ENCODE measurements at regions of chr3 and their contacts with region 1.

Region 1: GRCh38 chr3:184229394-184230080 is at the start of gene VWA5B2:
- DNase-seq: peak; percentile 74
- ATAC-seq: peak; percentile 97
- H3K4me3 Mint-ChIP-seq: peak within 1 kb of the TSS; percentile 37
- H3K27ac Mint-ChIP-seq: no peak within 1 kb of the TSS
- H3K4me1 Mint-ChIP-seq: peaks cover 9% of the 10 kb centered on the region
- H3K27me3 Mint-ChIP-seq: peaks cover 48% of the 10 kb centered on the region
- total RNA-seq, gene VWA5B2: not detected

Region 2: GRCh38 chr3:183895296-183895695 is 334.2 kb before region 1 on chr3:
- CTCF ChIA-PET with region 1: interaction called, 11 read pairs
- POLR2A ChIA-PET with region 1: no interaction called
- DNase-seq: peak; percentile 56
- ATAC-seq: peak; percentile 62
- H3K4me3 Mint-ChIP-seq: no peak overlapping the region
- H3K27ac Mint-ChIP-seq: no peak overlapping the region
- H3K4me1 Mint-ChIP-seq: peaks cover 2% of the 10 kb centered on the region
- H3K27me3 Mint-ChIP-seq: peaks cover 7% of the 10 kb centered on the region

Region 3: DNA sequence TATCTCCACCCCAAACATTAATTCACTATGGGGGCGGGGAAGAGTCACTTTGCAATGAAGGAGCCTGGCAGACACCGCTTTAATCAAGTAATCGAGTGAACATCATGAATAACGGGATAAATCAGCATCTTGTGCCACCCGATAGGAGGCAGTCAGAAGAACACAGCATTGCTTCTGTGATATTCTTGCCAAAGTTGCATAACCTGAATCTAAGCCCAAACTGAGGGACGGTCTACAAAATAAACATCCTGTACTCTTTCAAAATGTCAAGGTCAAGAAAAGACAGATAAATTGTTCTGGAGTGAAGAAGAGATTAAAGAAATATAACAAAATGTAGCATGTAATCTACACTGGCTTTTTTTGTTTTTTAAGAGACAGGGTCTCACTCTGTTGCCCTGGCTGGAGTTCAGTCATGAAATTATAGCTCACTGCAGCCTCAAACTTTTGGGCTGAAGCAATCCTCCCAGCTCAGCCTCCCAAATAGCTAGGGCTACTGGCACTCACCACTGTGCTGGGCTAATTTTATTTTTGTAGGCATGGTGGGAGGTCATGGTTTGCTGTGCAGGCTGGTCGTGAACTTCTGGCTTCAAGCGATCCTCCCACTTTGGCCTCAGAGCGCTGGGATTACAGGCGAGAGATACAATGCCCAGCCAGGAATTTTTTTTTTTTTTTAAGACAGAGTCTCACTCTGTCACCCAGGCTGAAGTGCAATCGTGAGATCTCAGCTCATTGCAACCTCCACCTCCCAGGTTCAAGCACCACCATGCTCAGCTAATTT is 20.2 kb before region 1 on chr3:
- CTCF ChIA-PET with region 1: interaction called, 18 read pairs
- POLR2A ChIA-PET with region 1: interaction called, 3 read pairs
- DNase-seq: no peak
- ATAC-seq: no peak
- H3K4me3 Mint-ChIP-seq: no peak overlapping the region
- H3K27ac Mint-ChIP-seq: no peak overlapping the region
- H3K4me1 Mint-ChIP-seq: no peaks in the 10 kb centered on the region
- H3K27me3 Mint-ChIP-seq: peaks cover 14% of the 10 kb centered on the region

Region 4: GRCh38 chr3:184240384-184241140 is 11.0 kb after region 1 on chr3:
- CTCF ChIA-PET with region 1: interaction called, 22 read pairs
- POLR2A ChIA-PET with region 1: interaction called, 3 read pairs
- DNase-seq: peak; percentile 40
- ATAC-seq: peak; percentile 40
- H3K4me3 Mint-ChIP-seq: no peak overlapping the region
- H3K27ac Mint-ChIP-seq: no peak overlapping the region
- H3K4me1 Mint-ChIP-seq: no peaks in the 10 kb centered on the region
- H3K27me3 Mint-ChIP-seq: no peaks in the 10 kb centered on the region

Region 5: DNA sequence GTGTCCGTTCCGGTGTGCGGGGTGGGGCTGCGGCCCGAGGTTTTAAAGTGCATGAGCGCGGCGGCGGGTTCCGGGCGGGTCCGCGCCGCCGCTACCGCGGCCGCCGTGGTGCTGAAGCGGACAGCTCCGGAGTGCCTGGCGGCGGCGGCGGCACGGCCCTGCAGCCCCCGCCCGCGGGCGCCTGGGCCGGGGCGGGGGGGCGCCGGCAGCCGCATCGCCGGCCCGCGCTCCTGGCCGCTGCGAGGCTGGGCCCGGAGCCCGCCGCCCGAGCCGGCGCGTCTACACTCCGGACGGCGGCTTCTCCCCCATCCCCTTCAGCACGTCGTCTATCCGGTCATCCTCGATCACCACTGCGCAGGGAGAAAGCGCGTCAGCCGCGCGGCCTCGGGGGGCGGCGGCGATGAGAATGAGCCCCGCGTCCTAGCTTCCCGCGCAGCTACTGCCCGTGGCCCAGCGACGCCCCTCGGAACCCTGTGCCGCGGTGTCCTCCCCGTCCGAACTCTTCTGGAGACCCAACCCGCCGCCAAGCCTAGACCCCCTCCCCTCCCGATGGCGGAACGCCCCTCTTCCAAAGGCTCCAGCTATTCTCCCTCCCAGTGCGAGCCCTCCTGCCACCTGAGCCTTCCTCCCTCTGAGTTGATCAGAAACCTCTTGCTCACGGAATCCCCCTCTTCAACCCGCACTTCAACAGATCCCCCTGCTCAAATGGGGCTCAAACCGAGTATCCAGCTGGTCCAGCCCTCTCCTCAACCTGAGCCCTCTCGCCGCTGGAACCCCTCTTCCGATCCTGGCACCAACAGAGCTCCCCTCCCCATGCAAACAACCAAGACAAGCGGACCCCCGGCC is 30.6 kb after region 1 on chr3:
- CTCF ChIA-PET with region 1: interaction called, 11 read pairs
- POLR2A ChIA-PET with region 1: no interaction called
- DNase-seq: peak; percentile 49
- ATAC-seq: peak; percentile 63
- H3K4me3 Mint-ChIP-seq: peak overlapping the region; percentile 66
- H3K27ac Mint-ChIP-seq: peak overlapping the region; percentile 55
- H3K4me1 Mint-ChIP-seq: peaks cover 23% of the 10 kb centered on the region
- H3K27me3 Mint-ChIP-seq: peaks cover 29% of the 10 kb centered on the region

Region 6: GRCh38 chr3:184295771-184296170 is 66.2 kb after region 1 on chr3:
- CTCF ChIA-PET with region 1: interaction called, 33 read pairs
- POLR2A ChIA-PET with region 1: no interaction called
- DNase-seq: no peak
- ATAC-seq: no peak
- H3K4me3 Mint-ChIP-seq: no peak overlapping the region
- H3K27ac Mint-ChIP-seq: no peak overlapping the region
- H3K4me1 Mint-ChIP-seq: peaks cover 21% of the 10 kb centered on the region
- H3K27me3 Mint-ChIP-seq: peaks cover 11% of the 10 kb centered on the region

Region 7: DNA sequence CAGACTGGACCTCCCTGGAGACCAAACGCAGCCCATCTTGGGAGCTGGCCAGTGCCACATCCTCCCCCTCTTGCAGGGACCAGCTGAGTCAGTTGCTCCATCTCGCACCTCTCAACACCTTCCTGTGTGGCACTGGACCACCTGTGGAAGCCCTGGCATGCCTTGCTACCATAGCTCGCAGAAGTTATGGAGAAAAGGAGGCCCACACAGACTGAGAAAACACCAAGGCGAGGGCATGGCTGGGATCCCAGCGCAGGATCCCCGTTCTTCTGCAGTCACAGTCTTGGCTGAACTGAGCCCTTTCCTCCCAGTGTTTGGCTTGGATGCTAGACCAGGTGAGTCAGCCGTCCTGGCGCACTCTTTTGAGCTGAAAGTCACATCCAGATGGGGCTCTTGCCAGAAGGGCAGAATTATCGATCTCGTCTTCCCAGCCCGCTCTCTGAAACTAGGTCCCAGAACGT is 197.2 kb after region 1 on chr3:
- CTCF ChIA-PET with region 1: no interaction called
- POLR2A ChIA-PET with region 1: no interaction called
- DNase-seq: no peak
- ATAC-seq: no peak
- H3K4me3 Mint-ChIP-seq: no peak overlapping the region
- H3K27ac Mint-ChIP-seq: no peak overlapping the region
- H3K4me1 Mint-ChIP-seq: no peaks in the 10 kb centered on the region
- H3K27me3 Mint-ChIP-seq: peaks cover 5% of the 10 kb centered on the region

Region 8: GRCh38 chr3:184459355-184459754 is 229.8 kb after region 1 on chr3:
- CTCF ChIA-PET with region 1: no interaction called
- POLR2A ChIA-PET with region 1: no interaction called
- DNase-seq: no peak
- ATAC-seq: no peak
- H3K4me3 Mint-ChIP-seq: no peak overlapping the region
- H3K27ac Mint-ChIP-seq: no peak overlapping the region
- H3K4me1 Mint-ChIP-seq: no peaks in the 10 kb centered on the region
- H3K27me3 Mint-ChIP-seq: peaks cover 3% of the 10 kb centered on the region

Measured in activated CD8-positive, alpha-beta T cell treated with anti-CD3 and anti-CD28 coated beads, Interleukin-2, amount 10 ng/mL, durations not matched to agents 7 days and 5 days (primary cell).